ENCODE measurements at regions of chr7 and their contacts with region 1.

Region 1: GRCh38 chr7:22452142-22452959 is 47.6 kb downstream of the STEAP1B start:
- DNase-seq: no peak
- ATAC-seq: peak; percentile 62

Region 2: GRCh38 chr7:22146961-22147512 is 305.3 kb before region 1 on chr7:
- intact Hi-C with region 1: no loop called
- DNase-seq: no peak
- ATAC-seq: no peak

Region 3: GRCh38 chr7:22350466-22351328 is 101.7 kb before region 1 on chr7:
- intact Hi-C with region 1: no loop called
- DNase-seq: no peak
- ATAC-seq: no peak

Region 4: GRCh38 chr7:22364900-22365299 is 87.5 kb before region 1 on chr7:
- intact Hi-C with region 1: loop called (anchors 5 kb)
- DNase-seq: no peak
- ATAC-seq: no peak

Region 5: DNA sequence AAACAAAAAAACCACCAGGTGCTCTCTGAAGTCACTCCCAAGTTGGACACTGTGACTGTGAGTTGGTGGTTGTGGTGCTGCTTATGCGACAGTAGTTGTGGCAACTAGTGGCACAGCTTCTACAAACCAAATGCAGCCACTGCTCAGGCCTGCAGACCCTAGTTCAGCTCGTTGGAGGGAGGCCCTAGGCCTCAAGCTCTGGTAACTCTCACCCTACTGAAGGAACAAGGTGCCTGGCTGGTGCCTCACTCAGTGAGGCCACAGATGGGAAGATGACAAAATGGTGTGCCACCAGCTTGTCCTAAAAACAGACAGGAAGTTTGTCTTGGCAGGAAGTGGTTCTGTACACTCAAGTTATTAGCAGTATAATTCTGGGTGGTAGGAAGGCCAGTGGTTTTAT is 50.1 kb before region 1 on chr7:
- intact Hi-C with region 1: no loop called
- DNase-seq: peak; percentile 61
- ATAC-seq: no peak